Adrenal gland (tissue), 19 donors: ENCODE measurements at regions of chr1 and their contacts with region 1.

Region 1: DNA sequence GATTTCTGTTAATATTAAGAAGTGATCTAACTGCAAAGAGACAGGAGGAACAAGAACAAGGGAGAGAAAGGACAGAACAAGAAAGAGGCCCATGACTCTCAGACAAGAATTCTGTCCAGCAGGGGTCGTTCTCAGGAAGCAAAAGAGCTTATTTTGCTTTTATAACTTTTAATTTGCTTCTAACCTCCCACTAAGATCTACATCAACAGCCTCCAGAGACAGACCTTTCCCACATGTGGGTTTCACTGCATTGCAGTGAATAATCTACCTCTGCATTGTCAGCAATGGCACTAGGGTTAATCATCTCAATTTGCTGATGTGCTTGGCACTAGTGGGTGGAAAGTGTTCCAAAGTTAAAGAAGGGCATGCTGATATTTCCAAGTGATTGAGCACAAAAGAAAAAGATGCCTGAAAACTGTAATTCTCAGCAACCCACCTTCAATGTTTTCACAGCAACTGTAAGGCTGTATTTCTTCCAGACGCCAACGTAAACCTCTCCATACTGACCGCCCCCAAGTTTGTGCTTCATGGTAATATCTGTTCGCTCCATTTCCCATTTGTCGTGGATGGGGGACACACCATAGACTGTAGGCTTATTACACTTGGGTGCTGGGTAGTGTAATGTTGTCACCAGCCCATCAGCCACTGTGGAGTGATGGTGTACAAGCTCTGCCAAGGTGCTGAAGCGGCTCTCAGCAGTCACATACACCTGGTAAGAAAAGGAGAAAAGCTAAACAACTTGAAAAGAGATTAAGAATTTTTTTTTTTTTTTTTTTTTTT is 39.5 kb downstream of the TOR3A start:
- DNase-seq: peak in 5 of 7 donors; percentile 26 to 68 (median 66)
- H3K4me3 ChIP-seq: no peak overlapping the region
- H3K27ac ChIP-seq: no peak overlapping the region
- H3K4me1 ChIP-seq: no peaks in the 10 kb centered on the region
- H3K27me3 ChIP-seq: no peaks in the 10 kb centered on the region
- CTCF ChIP-seq: peak; percentile 41 to 68 (median 58)
- POLR2A ChIP-seq: no peak

Region 2: DNA sequence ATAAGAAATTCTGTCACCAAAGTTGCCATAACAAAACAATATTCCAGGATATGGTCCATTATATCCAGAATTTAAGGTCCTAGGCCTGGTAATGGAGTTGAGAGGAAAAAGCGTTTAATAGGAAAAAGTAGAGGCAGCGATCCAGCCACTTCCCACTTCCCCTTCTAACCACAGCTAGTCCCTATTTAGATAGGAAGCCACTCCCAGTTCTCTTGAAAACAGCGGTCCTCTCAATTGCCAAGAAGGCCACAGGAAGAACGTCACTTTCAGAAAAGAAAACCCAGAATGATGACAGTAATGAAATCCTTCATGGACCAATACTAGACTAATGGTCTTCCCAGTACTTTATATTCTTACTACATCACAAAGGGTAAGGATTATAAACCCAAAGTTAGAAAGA is 69.5 kb after region 1 on chr1:
- intact Hi-C with region 1: loop called (anchors 10 kb)
- DNase-seq: peak in 1 of 7 donors; percentile 32
- H3K4me3 ChIP-seq: no peak overlapping the region
- H3K27ac ChIP-seq: peak overlapping the region in 1 of 5 donors; percentile 1
- H3K4me1 ChIP-seq: no peaks in the 10 kb centered on the region
- H3K27me3 ChIP-seq: no peaks in the 10 kb centered on the region
- CTCF ChIP-seq: no peak
- POLR2A ChIP-seq: no peak